CD8-positive, alpha-beta memory T cell (primary cell): ENCODE measurements at regions of chr4 and their contacts with region 1.

Region 1: GRCh38 chr4:183444214-183445066 is at the start of gene CDKN2AIP:
- DNase-seq: peak; percentile 90 to 97 (median 95)
- H3K4me3 ChIP-seq: peak within 1 kb of the TSS; percentile 83
- H3K4me3 Mint-ChIP-seq: peak within 1 kb of the TSS; percentile 95 to 100 (median 96)
- H3K27ac ChIP-seq: peak within 1 kb of the TSS; percentile 89
- H3K27ac Mint-ChIP-seq: peak within 1 kb of the TSS; percentile 97 to 100 (median 98)
- H3K4me1 ChIP-seq: peaks cover 49% of the 10 kb centered on the region
- H3K4me1 Mint-ChIP-seq: peaks cover 40 to 58% (median 49%) of the 10 kb centered on the region in 3 donors
- H3K27me3 ChIP-seq: no peaks in the 10 kb centered on the region
- H3K27me3 Mint-ChIP-seq: no peaks in the 10 kb centered on the region
- total RNA-seq, gene CDKN2AIP: 29.4 to 30.1 TPM

Region 2: DNA sequence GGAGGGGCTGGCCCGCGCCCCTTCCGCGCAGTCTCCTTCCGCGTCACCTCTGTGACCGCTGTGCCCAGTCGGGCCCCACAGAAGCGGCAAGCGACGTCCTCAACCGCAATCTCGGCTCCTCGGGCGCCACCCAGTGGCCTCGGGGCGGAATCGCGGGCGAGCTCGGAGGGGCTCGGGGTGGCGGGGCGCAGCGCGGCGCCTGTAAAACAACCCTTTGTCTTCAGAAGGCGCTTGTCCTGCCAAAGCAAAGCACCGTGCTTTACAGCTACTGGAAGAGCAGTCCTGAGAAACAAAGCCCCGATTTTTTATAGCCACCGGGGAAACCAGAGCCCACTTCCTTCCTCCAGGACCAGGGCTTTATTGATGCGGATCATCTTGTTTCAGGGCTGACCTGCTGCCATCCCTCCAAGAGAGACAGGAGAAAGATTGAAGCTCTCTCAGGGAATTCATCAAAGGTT is 37.3 kb before region 1 on chr4:
- CTCF ChIA-PET with region 1: interaction called, 12 read pairs
- POLR2A ChIA-PET with region 1: interaction called, 9 read pairs
- DNase-seq: peak; percentile 84 to 94 (median 86)
- H3K4me3 ChIP-seq: peak overlapping the region; percentile 71
- H3K4me3 Mint-ChIP-seq: peak overlapping the region; percentile 77 to 94 (median 84)
- H3K27ac ChIP-seq: peak overlapping the region; percentile 64
- H3K27ac Mint-ChIP-seq: peak overlapping the region; percentile 67 to 97 (median 88)
- H3K4me1 ChIP-seq: peaks cover 9% of the 10 kb centered on the region
- H3K4me1 Mint-ChIP-seq: peaks cover 10 to 16% (median 15%) of the 10 kb centered on the region in 3 donors
- H3K27me3 ChIP-seq: no peaks in the 10 kb centered on the region
- H3K27me3 Mint-ChIP-seq: no peaks in the 10 kb centered on the region

Region 3: DNA sequence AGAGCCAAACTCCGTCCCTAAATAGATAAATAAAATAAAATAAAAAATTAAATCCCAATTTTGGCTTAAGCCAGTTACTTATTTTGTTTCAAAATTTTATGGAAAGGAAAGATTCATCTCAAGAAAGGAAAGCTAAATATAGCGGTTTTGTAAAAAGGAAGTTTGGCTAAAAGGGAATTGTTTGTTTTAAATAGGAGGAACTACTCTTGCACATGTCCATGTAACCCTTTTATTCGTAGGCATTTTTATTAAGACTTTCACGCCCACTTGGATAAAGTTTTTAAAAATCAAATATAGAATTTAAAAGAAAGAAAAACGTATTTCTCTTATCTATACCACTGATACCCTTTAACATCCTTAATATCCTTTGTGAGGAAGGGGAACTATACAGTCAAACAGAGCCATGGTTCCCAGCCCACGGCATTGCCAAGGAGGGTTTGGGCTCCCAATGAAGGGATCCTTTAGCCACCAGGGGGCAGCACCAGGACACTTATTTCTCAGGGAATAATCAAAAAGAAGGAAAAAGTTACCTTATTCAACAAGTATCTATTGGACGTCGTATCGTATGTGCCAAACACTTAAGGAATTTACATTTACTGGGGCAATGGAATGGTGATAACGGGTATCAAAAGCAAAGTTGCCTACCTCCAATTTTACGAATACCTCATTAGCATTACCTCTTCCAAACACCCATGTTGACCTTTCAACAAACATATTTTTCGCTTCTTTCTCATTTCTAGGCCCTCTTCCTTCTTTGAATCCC is 27.7 kb after region 1 on chr4:
- CTCF ChIA-PET with region 1: no interaction called
- POLR2A ChIA-PET with region 1: no interaction called
- DNase-seq: peak; percentile 47 to 85 (median 72)
- H3K4me3 ChIP-seq: no peak overlapping the region
- H3K4me3 Mint-ChIP-seq: no peak overlapping the region
- H3K27ac ChIP-seq: no peak overlapping the region
- H3K27ac Mint-ChIP-seq: no peak overlapping the region
- H3K4me1 ChIP-seq: peaks cover 6% of the 10 kb centered on the region
- H3K4me1 Mint-ChIP-seq: peaks cover 4 to 5% (median 4%) of the 10 kb centered on the region in 3 donors
- H3K27me3 ChIP-seq: no peaks in the 10 kb centered on the region
- H3K27me3 Mint-ChIP-seq: peaks cover 0 to 3% of the 10 kb centered on the region in 2 donors

Region 4: GRCh38 chr4:183504064-183504929 is 59.9 kb after region 1 on chr4:
- CTCF ChIA-PET with region 1: interaction called, 4 read pairs
- POLR2A ChIA-PET with region 1: interaction called, 38 read pairs
- DNase-seq: peak; percentile 99 to 100 (median 99)
- H3K4me3 ChIP-seq: peak overlapping the region; percentile 68
- H3K4me3 Mint-ChIP-seq: peak overlapping the region; percentile 95 to 99 (median 98)
- H3K27ac ChIP-seq: peak overlapping the region; percentile 97
- H3K27ac Mint-ChIP-seq: peak overlapping the region; percentile 87 to 98 (median 96)
- H3K4me1 ChIP-seq: peaks cover 20% of the 10 kb centered on the region
- H3K4me1 Mint-ChIP-seq: peaks cover 17 to 29% (median 17%) of the 10 kb centered on the region in 3 donors
- H3K27me3 ChIP-seq: no peaks in the 10 kb centered on the region
- H3K27me3 Mint-ChIP-seq: peaks cover 0 to 5% of the 10 kb centered on the region in 2 donors